Tibial artery (tissue), 4 donors: ENCODE measurements at regions of chr19 and their contacts with region 1.

Region 1: GRCh38 chr19:57233207-57233606 is 2.4 kb downstream of the AURKC start:
- DNase-seq: no peak
- H3K4me3 ChIP-seq: no peak overlapping the region
- H3K27ac ChIP-seq: no peak overlapping the region
- H3K4me1 ChIP-seq: no peaks in the 10 kb centered on the region
- H3K27me3 ChIP-seq: no peaks in the 10 kb centered on the region
- CTCF ChIP-seq: no peak

Region 2: GRCh38 chr19:57191141-57192076 is 41.8 kb before region 1 on chr19 and contains the start of gene ZNF264:
- intact Hi-C with region 1: no loop called
- DNase-seq: peak; percentile 86 to 93
- H3K4me3 ChIP-seq: peak within 1 kb of the TSS; percentile 90 to 99
- H3K27ac ChIP-seq: peak within 1 kb of the TSS; percentile 89 to 95
- H3K4me1 ChIP-seq: peaks cover 4 to 23% (median 17%) of the 10 kb centered on the region in 4 donors
- H3K27me3 ChIP-seq: no peaks in the 10 kb centered on the region
- CTCF ChIP-seq: no peak

Region 3: GRCh38 chr19:57245959-57246358 is 12.8 kb after region 1 on chr19:
- intact Hi-C with region 1: no loop called
- DNase-seq: no peak
- H3K4me3 ChIP-seq: no peak overlapping the region
- H3K27ac ChIP-seq: no peak overlapping the region
- H3K4me1 ChIP-seq: peaks cover 0 to 22% (median 16%) of the 10 kb centered on the region in 4 donors
- H3K27me3 ChIP-seq: no peaks in the 10 kb centered on the region
- CTCF ChIP-seq: no peak

Region 4: DNA sequence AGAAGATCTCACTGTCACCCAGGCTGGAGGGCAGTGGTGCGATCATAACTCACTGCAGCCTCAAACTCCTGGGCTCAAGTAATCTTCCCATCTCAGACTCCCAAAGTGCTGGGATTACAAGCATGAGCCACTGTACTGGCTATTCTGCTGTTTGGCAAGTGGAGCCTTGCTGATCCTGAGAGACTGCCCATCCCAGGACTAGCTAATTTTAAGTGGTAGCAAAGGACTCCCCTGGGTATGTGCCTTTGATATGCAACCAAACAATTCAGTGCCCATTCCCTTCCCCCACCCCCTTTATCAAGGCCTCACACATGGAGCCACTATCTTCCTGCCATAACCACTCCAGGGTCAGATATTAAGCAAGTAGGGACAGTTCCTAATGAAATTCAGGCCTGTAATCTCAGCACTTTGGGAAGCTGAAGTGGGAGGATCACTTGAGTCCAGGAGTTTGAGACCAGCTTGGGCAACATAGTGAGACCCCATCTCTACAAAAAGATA is 30.1 kb after region 1 on chr19:
- intact Hi-C with region 1: loop called (anchors 1 kb)
- DNase-seq: no peak
- H3K4me3 ChIP-seq: no peak overlapping the region
- H3K27ac ChIP-seq: no peak overlapping the region
- H3K4me1 ChIP-seq: no peaks in the 10 kb centered on the region
- H3K27me3 ChIP-seq: no peaks in the 10 kb centered on the region
- CTCF ChIP-seq: no peak